ENCODE measurements at regions of chr12 and their contacts with region 1.

Region 1: GRCh38 chr12:53047221-53048042 is 2.4 kb upstream of the TNS2 start:
- DNase-seq: peak; percentile 69
- H3K4me3 ChIP-seq: peak overlapping the region; percentile 71
- H3K27ac ChIP-seq: peak overlapping the region; percentile 73
- H3K4me1 ChIP-seq: peaks cover 36% of the 10 kb centered on the region
- H3K27me3 ChIP-seq: no peaks in the 10 kb centered on the region
- CTCF ChIP-seq: no peak

Region 2: DNA sequence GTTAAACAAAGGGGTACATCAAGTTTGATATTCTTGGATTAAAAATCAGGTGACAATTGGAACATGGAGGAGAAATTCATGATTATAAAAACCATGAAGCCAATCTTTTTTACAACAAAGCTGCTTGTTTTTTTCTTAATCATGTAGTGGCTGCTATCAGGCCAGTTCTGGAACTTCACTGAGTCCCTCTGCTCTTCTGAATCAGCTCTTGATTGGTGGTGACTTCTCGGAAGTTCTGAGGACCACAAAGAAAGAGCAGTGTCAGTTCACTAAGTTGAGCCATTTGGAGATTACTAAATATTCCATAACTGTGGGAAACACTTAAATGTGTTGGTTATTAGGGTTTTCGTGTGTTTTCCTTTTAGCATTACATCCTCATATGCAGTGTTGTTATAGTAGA is 32.7 kb before region 1 on chr12:
- CTCF ChIA-PET with region 1: interaction called, 13 read pairs
- POLR2A ChIA-PET with region 1: no interaction called
- intact Hi-C with region 1: no loop called
- DNase-seq: no peak
- H3K4me3 ChIP-seq: no peak overlapping the region
- H3K27ac ChIP-seq: no peak overlapping the region
- H3K4me1 ChIP-seq: peaks cover 6% of the 10 kb centered on the region
- H3K27me3 ChIP-seq: no peaks in the 10 kb centered on the region
- CTCF ChIP-seq: no peak

Region 3: DNA sequence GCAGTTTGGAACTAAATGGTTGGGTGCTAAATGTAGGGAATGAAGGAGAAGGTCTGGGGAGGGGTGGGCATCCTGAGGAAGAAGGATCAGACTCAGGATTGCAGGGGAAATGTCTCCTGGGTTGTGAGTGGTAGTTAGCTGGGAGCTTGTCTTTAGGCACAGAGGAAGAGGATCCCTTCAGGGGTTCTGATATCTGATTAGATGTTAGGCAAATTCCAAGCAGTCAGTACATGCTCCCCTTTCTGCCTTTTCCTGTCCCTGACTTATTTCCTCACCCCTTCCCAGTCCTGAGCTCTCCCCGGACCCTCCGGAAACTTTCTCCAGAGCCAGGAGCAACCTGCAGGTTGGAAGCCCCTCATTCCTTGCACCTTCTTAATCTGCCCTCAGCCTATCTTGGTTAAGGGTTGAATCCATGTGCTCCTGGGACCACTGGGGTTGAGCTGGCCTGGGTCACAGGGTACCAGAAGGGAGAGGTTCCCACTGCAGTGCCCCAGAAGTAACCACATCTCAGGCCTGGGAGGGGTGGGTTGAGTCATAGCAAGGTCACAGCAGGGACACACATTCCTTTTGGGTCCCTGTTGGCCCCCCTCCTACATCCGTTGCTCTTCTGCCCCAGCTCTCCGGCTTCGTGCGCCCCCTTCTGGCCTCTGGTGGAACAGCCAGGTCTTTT is 51.7 kb after region 1 on chr12:
- CTCF ChIA-PET with region 1: interaction called, 5 read pairs
- POLR2A ChIA-PET with region 1: no interaction called
- intact Hi-C with region 1: loop called (anchors 5 kb)
- DNase-seq: peak; percentile 93
- H3K4me3 ChIP-seq: peak overlapping the region; percentile 61
- H3K27ac ChIP-seq: peak overlapping the region; percentile 6
- H3K4me1 ChIP-seq: peaks cover 23% of the 10 kb centered on the region
- H3K27me3 ChIP-seq: no peaks in the 10 kb centered on the region
- CTCF ChIP-seq: peak; percentile 93

Region 4: DNA sequence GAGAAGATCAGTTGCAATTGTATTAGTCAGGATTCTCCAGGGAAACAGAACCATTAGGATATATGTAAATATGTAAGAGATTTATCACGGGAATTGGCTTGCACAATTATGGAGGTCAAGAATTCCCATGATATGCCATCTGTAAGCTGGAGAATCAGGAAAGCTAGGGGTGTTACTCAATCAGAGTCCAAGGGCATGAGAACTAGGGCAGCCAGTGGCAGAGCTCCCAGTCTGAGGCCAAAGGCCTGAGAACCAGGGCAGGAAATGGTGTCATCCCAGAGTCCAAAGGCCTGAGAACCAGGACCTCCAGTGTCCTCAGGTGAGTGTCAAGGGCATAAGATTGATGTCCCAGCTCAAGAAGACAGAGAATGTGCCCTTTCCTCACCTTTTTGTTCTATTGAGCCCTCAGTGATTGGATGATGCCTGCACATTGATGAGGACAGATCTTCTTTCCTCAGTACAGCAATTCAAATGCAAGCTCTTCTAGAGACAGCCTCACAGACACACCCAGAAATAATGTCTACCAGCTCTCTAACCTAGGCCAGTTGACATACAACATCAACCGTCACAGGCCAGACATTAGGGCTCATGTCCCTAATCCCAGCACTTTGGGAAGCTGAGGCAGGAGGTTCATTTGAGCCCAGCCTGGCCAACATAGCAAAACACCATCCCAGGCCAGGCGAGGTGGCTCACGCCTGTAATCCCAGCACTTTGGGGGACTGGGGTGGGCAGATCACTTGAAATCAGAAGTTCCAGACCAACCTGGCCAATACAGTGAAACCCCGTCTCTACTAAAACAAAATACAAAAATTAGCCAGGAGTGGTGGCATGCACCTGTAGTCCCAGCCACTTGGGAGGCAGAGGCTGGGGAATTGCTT is 98.2 kb after region 1 on chr12:
- CTCF ChIA-PET with region 1: no interaction called
- POLR2A ChIA-PET with region 1: no interaction called
- intact Hi-C with region 1: no loop called
- DNase-seq: no peak
- H3K4me3 ChIP-seq: no peak overlapping the region
- H3K27ac ChIP-seq: no peak overlapping the region
- H3K4me1 ChIP-seq: no peaks in the 10 kb centered on the region
- H3K27me3 ChIP-seq: no peaks in the 10 kb centered on the region
- CTCF ChIP-seq: no peak

Region 5: DNA sequence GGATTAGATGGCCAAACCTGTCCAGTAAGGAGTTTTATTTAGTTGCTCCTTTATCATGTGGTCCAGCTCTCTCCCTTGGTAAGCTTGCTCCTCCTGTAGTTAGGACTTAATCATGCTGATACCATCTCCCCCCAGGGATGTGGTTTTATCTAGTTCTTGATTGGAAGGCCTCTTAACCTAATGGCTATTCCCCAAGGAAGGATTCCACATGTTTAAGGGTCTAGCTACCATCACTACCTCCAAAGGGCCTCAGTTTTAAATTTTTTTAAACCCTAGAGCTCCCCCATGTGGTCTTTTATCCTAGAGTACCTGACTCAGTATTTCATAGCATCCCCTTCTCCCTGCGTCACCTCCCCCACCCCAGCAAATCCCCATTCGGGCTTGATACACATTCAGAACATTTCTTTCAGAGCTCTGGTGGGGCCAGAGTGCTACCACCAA is 429.4 kb after region 1 on chr12:
- CTCF ChIA-PET with region 1: no interaction called
- POLR2A ChIA-PET with region 1: no interaction called
- intact Hi-C with region 1: no loop called
- DNase-seq: peak; percentile 77
- H3K4me3 ChIP-seq: no peak overlapping the region
- H3K27ac ChIP-seq: no peak overlapping the region
- H3K4me1 ChIP-seq: peaks cover 4% of the 10 kb centered on the region
- H3K27me3 ChIP-seq: no peaks in the 10 kb centered on the region
- CTCF ChIP-seq: peak; percentile 54